Left colon (tissue), 2 donors: ENCODE measurements at regions of chr9 and their contacts with region 1.

Region 1: GRCh38 chr9:5499889-5500398 is 10.4 kb upstream of the PDCD1LG2 start:
- DNase-seq: no peak
- ATAC-seq: no peak

Region 2: DNA sequence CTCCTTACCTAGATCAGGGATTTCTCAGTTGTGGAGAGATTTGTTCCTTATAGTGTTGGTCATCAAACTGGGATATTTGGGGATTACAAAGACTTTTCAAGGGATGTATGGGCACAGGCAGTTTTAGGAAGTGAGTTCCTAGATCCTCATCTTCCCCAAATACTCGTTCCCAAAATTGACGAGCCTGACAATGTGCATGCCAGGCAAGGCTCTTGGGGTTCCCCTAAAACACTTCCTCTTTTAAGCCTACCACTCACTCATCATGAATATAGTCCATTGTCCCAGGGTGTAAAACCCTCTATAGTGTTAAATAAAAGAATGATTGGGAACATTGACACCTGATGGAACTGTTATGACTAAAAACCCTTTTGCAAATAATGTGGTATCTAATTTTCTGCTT is 36.7 kb after region 1 on chr9:
- intact Hi-C with region 1: no loop called
- DNase-seq: no peak
- ATAC-seq: no peak

Region 3: GRCh38 chr9:5549658-5550310 is 49.8 kb after region 1 on chr9:
- intact Hi-C with region 1: loop called in 1 of 2 experiments (anchors 2 kb)
- DNase-seq: no peak
- ATAC-seq: peak; percentile 25